Ovary (tissue), 10 donors: ENCODE measurements at regions of chr1 and their contacts with region 1.

Region 1: DNA sequence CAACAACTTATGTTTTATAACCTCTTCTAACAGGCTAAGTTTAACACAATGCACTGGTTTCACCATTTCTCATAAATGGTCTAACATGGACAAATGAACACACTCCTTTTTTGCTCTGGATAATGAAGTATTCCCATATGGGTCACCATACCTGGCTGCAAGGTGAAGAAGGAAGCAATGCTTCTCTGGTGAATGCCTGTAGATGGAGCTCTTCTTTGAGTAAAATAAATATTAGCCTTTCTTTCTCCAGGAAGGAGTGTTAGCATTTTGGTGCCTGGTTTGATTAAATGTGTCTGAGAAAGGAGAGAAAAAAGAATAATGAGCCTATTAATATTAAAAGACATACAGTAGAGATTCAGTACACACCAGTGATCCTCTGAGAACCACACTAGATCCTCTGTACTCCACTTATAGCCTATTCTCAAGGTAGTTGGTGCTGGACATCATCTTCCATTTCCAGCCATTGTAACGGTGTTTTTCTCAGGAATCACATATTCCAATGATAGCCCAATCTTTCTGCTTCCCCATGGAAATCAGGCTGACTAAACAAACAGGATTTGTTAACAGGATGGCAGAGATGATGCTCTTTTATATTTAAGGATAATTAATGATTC is 17.6 kb downstream of the MTFR1L start:
- DNase-seq: no peak
- H3K4me3 ChIP-seq: no peak overlapping the region
- H3K27ac ChIP-seq: no peak overlapping the region
- H3K4me1 ChIP-seq: peaks cover 2% of the 10 kb centered on the region
- H3K27me3 ChIP-seq: no peaks in the 10 kb centered on the region
- CTCF ChIP-seq: no peak
- EP300 ChIP-seq: no peak
- POLR2A ChIP-seq: no peak

Region 2: GRCh38 chr1:24391882-24392603 is 1445.3 kb before region 1 on chr1:
- intact Hi-C with region 1: no loop called
- DNase-seq: peak; percentile 24 to 67 (median 52)
- H3K4me3 ChIP-seq: no peak overlapping the region
- H3K27ac ChIP-seq: peak overlapping the region; percentile 13 to 68
- H3K4me1 ChIP-seq: no peaks in the 10 kb centered on the region
- H3K27me3 ChIP-seq: no peaks in the 10 kb centered on the region
- CTCF ChIP-seq: peak in 2 of 3 donors; percentile 37
- EP300 ChIP-seq: no peak
- POLR2A ChIP-seq: no peak

Region 3: DNA sequence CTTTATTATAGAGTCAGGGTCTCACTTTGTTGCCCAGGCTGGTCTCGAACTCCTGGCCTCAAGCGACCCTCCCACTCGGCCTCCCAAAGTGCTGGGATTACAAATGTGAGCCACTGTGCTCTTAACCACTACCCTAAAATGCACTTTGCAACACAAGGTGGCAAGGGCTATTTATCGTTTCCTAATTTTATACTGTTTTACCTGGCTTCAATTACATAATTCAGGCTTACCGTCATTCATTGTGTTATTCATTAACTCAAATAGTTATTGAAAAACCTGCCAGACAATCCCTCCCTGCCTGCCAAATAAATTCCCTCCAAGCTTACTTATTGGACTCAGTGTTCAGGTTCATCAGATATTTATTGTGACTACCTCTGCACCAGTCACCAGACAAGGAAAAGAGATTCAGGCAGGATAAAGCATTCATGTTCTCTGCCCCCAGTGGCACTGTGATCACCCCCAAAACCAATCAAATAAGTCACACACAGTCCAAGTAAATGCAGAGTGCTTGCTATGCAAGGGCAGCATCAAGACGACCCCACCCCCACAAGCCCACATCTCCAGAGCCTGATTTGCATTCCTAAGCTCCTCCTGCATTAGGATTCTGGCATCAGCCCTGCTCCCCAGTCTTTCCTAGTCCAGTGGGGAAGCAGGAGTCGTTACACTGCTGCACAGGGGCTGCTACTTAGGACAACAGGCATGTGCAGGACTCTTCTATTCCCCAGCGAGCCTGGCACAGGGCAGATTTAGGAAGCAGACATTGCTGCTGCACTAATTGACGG is 30.0 kb after region 1 on chr1:
- intact Hi-C with region 1: loop called in 1 of 4 experiments (anchors 1 kb)
- DNase-seq: no peak
- H3K4me3 ChIP-seq: no peak overlapping the region
- H3K27ac ChIP-seq: no peak overlapping the region
- H3K4me1 ChIP-seq: peaks cover 11% of the 10 kb centered on the region
- H3K27me3 ChIP-seq: no peaks in the 10 kb centered on the region
- CTCF ChIP-seq: no peak
- EP300 ChIP-seq: no peak
- POLR2A ChIP-seq: no peak

Region 4: DNA sequence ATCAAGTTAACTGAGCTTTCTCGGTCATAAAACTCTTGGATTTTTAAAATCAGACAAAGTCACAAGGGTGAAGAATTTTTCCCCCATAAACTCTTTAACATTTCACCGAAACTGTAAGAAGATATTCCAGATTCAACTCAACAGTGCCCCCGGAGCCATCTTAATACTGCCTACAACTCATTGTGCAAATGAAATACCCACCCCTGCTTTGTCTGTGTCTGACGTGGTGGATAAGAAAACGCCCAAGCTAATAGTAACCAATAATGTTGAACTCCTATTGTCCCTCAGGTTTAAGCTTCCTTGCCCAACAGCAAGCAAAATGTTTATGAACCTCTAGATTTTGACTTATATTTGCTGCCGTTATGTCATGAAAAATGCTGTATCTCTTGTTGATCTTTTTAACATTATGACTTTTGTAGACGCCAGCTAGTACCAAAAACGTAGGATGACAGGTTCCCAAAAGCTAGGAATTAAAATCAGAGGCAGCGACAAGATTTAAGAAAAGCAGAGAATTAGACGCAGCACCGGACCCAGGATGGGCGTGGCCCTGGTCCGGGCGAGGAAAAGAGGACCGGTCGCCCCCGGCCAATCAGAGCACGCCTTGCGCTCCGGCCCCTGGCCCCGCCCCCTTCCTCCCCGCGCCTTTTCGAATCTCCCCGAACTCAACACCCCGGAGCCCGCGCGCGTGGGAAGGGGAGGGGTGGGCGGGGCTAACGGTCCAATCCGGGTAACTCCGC is 67.7 kb after region 1 on chr1:
- intact Hi-C with region 1: no loop called
- DNase-seq: peak; percentile 95 to 99 (median 98)
- H3K4me3 ChIP-seq: peak overlapping the region; percentile 79
- H3K27ac ChIP-seq: peak overlapping the region in 1 of 2 donors; percentile 41
- H3K4me1 ChIP-seq: no peaks in the 10 kb centered on the region
- H3K27me3 ChIP-seq: no peaks in the 10 kb centered on the region
- CTCF ChIP-seq: no peak
- EP300 ChIP-seq: no peak
- POLR2A ChIP-seq: no peak